ENCODE measurements at regions of chr2 and their contacts with region 1.

Region 1: DNA sequence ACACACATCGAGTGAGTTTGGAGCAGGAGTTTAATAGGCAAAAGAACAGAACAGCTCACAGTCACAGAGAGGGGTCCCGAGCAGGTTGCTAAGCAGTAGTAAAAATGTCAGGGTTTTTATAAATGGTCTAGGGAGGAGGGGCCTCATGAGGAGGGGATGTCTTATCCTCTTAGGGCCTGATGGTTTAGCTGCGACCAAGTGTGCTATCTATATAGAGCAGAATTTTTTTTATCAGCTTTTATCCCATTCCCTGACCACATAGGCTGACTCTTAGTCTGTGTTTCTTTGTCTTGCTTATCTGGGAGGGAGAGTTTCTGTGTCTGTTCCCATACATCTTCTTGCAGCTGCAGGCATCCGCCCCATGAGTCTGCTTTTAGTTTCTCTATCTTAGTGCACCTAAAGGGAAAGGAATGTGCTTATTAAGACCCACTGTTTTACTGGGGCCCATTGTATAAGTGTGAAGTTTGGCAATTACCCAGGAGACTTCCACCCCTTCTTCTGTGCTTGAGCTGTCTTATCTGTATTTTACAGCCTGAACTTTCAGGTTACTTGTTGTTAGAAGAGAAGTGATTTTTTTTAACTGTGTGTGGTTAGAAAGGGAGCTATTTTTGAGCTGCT is 30.4 kb upstream of the GMCL1 start:
- DNase-seq: peak; percentile 89 to 97 (median 89)
- ATAC-seq: peak; percentile 95
- H3K4me3 ChIP-seq: peak overlapping the region; percentile 30
- H3K27ac ChIP-seq: peak overlapping the region; percentile 53; the same call in 1 of the 3 replicates
- H3K4me1 ChIP-seq: peaks cover 3 to 23% of the 10 kb centered on the region in 2 experiments; a peak in 4 of 5 replicates
- H3K27me3 ChIP-seq: no peaks in the 10 kb centered on the region; a peak in 1 of 5 replicates
- CTCF ChIP-seq: no peak
- EP300 ChIP-seq: peak; percentile 95
- POLR2A ChIP-seq: no peak
- RAD21 ChIP-seq: peak in 1 of 2 experiments; percentile 26; a peak in 3 of 4 replicates

Region 2: DNA sequence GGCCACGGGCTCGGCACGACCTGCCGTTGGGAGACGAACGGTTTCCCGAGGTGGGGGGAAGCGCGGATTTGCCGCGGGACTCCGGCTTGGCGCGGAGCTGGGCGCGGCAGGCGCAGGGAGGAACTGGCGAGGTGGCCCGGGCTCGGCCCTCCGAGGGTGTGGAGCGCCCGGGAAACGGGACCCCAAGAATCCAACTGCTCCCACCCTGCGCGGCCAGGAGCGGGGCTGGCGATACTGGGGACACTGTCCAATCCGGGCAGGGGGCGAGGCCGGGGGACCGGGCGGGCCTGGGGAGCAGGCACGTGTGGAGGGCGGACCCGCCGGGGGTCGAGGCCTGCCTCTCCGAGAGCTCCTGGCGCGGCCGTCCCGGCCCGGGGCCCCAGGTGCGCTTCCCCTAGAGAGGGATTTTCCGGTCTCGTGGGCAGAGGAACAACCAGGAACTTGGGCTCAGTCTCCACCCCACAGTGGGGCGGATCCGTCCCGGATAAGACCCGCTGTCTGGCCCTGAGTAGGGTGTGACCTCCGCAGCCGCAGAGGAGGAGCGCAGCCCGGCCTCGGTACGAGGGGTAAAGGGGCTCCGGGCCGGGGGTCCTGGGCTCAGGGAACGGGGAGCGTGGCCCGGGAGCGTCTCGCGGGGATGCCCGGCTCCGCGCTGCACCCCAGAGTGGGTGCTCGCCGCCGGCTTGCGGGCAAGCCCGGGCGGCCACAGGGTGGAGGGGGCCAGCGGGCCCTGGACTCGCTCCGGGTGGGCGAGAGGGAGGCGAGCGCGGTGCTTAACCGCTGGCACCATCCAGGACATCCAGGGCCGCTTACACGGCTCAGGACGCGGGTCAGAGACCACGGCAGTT is 57.2 kb before region 1 on chr2 and contains the start of gene ANXA4:
- CTCF ChIA-PET with region 1: no interaction called
- POLR2A ChIA-PET with region 1: interaction called, 5 read pairs
- in situ Hi-C with region 1: loop called (anchors 5 kb)
- intact Hi-C with region 1: loop called (anchors 5 kb)
- DNase-seq: peak; percentile 80 to 86 (median 82)
- ATAC-seq: peak; percentile 93
- H3K4me3 ChIP-seq: peak within 1 kb of the TSS; percentile 66
- H3K27ac ChIP-seq: peak within 1 kb of the TSS; percentile 73
- H3K4me1 ChIP-seq: peaks cover 18 to 25% of the 10 kb centered on the region in 2 experiments
- H3K27me3 ChIP-seq: no peaks in the 10 kb centered on the region
- CTCF ChIP-seq: no peak
- EP300 ChIP-seq: no peak
- POLR2A ChIP-seq: peak; percentile 77
- RAD21 ChIP-seq: no peak
- polyA plus RNA-seq, gene ANXA4: 11.6 to 13.2 TPM

Measured in K562 (cell line).